OCI-LY7 (cell line): ENCODE measurements at regions of chr17 and their contacts with region 1.

Region 1: DNA sequence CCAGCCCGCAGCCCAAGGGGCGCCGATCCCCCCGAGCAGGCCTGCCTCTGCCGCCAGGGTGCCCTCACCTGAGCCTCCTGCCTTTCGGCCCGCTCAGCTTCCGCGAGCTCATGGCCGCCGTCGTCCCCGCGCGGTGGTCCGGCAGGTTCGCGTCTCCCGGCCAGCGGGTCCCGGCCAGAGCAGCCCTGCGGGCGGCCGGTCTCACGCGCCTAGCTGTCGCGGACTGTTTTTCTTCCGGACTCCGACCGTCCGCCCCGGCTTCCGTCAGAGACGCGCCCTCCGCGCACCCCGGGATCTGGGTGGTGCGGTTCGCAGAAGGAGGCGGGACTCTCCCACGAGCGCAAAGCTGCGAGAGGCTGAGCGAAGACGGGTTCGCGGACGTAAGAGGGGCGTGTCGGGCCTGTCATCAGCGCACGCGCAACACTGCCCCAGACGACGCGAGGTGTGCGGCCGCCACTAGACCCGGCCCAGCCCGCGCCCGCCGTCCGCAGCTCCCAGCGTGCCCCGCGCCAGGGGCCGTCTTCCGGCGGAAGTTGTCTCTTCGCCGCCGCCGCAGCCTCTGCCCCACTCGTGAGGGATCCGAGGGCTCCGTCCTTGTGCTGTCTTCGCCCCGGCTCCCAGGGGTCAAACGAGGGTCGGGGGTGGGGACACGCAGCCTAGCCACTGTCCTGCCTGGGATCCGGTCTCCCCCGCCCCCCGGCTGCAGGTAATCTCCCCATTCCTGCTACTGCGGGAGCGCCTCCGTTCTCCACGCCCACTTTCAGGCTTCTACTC is at the start of gene INPP5K:
- DNase-seq: peak; percentile 99
- H3K4me3 ChIP-seq: peak within 1 kb of the TSS; percentile 88
- H3K27ac ChIP-seq: peak within 1 kb of the TSS; percentile 49
- H3K4me1 ChIP-seq: peaks cover 17% of the 10 kb centered on the region
- CTCF ChIP-seq: no peak
- total RNA-seq, gene INPP5K: 23.4 and 28.8 TPM in 2 replicates

Region 2: GRCh38 chr17:1275962-1276736 is 240.4 kb before region 1 on chr17:
- CTCF ChIA-PET with region 1: no interaction called
- POLR2A ChIA-PET with region 1: no interaction called
- intact Hi-C with region 1: loop called (anchors 5 kb)
- DNase-seq: peak; percentile 69
- H3K4me3 ChIP-seq: no peak overlapping the region
- H3K27ac ChIP-seq: no peak overlapping the region
- H3K4me1 ChIP-seq: no peaks in the 10 kb centered on the region
- CTCF ChIP-seq: peak; percentile 87

Region 3: DNA sequence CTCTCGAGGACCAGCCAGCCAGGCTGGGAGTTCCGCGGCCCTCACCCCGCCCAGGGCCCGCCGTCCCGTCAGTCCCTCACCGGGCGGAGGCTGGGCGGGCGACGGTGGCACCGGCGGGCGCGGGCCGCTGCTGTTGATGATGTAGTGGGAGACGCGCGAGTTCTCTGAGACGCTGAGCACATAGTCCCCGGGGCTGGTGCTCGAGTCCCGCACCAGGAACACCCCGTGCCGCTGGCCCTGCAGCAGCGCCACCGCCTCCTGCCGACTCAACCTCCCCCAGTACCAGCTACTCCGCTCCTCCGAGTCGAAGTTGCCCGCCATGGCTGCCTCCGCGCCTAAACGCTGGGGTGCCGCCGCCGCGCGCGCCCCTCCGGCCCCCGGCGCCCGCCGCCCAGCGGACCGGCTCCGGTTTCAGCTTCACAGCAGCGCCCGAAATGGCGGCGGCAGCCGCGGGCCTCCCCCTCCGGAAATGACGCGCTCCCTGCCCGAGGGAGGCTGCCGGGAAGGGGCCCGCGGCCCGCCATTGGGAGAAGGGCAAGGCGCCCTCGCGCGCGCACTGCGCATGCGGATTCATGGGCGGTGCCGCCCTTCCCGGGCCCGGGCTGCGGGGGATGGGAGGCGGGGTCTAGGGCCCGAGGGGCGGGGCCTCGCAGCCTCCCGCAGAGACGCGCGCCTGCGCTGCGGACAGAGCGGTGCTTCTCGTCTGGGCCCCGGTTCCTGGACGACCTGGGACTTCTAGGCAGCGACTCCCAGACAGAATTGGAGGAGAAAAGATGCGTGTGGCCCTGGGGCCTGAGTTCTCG is 60.6 kb before region 1 on chr17 and contains the start of gene CRK:
- CTCF ChIA-PET with region 1: no interaction called
- POLR2A ChIA-PET with region 1: no interaction called
- intact Hi-C with region 1: loop called (anchors 1 kb)
- DNase-seq: peak; percentile 98
- H3K4me3 ChIP-seq: peak within 1 kb of the TSS; percentile 99
- H3K27ac ChIP-seq: peak within 1 kb of the TSS; percentile 69
- H3K4me1 ChIP-seq: peaks cover 21% of the 10 kb centered on the region
- CTCF ChIP-seq: no peak
- total RNA-seq, gene CRK: 30.5 and 32.0 TPM in 2 replicates

Region 4: DNA sequence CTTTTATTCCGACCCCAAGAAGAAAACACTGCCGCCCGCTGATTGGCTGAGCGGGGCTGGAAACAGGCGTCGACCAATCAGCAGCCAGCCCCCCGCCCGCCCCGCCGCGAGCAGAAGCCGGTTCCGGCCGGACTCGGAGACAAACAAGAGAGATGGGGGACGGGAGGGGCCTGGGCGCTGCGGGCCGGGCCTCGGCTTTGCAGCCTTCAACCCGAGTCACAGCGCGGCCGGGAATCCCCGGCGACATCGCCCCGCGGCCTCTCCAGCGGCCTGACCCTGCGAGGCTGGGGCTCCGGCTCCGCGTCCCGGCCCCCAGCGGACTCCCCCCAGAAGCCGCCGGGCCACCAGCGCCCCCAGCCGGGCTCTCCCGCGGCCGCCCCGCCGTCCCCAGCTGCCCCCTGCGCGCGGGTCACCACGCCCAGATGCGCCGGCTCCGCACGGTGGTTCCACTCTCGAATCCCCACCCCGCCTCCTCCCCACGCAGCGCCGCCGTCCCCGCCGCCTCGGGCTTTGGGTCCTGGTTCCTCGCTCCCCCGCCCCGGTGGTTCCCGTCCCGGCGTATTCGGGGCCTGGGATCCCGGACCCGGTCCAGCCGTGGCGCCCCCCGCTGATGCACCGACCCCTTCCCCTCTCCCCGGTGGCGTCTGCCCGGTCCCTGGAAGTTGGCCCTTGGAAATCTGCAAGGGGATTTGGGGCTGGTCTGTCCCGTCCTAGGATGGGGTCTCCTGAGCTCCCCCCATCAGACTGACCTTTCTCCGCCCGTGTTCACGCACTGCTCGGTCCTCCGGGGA is 112.5 kb after region 1 on chr17:
- CTCF ChIA-PET with region 1: no interaction called
- POLR2A ChIA-PET with region 1: no interaction called
- intact Hi-C with region 1: loop called (anchors 5 kb)
- DNase-seq: peak; percentile 96
- H3K4me3 ChIP-seq: peak overlapping the region; percentile 80
- H3K27ac ChIP-seq: peak overlapping the region; percentile 79
- H3K4me1 ChIP-seq: peaks cover 58% of the 10 kb centered on the region
- CTCF ChIP-seq: peak; percentile 74